B cell (primary cell): ENCODE measurements at regions of chr20 and their contacts with region 1.

Region 1: DNA sequence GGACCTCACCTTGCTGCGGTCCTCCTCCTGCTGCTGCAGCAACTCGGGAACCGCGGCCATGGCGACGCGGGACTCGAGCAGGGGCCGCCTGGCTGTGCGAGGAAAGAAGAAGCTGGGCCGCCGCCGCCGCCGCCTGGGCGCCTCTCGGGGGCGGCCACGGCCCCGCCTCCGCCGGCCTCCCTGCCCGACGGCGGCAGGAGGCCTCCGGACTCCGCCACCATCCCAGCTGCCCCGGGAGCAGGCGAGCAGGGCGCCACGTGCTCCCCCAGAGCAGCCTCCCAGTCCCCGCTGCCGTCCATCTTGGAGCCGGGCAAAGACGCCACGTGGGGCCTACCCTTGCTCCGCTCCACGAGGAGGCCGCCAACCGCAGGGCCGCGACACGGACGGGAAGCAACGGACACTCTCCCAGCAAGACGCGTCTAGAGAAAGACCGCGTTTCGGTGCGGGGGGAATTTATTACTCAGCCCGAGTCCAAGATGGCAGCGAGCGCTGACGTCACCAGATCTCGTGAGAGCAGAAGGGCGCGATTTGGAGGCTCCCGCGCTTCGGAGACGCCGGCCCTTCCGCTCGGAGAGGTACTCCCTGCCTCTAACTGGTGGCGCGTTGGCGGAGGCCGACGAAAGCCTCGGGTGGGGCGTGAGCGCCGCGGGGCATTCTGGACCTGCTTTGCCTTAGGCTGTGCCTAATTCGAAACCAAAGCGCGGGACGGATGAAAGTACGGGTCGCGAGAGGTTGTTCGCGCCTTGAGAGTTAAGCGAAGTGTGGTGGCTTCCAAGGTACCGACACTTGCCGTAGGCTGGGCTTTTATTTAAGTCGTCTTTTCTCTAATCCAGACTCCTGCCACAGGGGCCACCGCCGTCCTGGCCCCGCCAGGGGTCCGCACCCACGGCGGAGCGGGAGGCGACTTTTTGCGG is at the starts of genes MGME1 and SNX5:
- DNase-seq: peak; percentile 100
- ATAC-seq: peak; percentile 82
- H3K4me3 ChIP-seq: peak within 1 kb of the TSS; percentile 76 to 99 (median 97)
- H3K4me3 Mint-ChIP-seq: peak within 1 kb of the TSS; percentile 96
- H3K27ac ChIP-seq: peak within 1 kb of the TSS; percentile 96 to 97
- H3K27ac Mint-ChIP-seq: peak within 1 kb of the TSS; percentile 98
- H3K4me1 ChIP-seq: peaks cover 58 to 60% of the 10 kb centered on the region in 2 donors
- H3K4me1 Mint-ChIP-seq: peaks cover 78% of the 10 kb centered on the region
- H3K27me3 ChIP-seq: no peaks in the 10 kb centered on the region
- H3K27me3 Mint-ChIP-seq: no peaks in the 10 kb centered on the region
- CTCF ChIP-seq: no peak
- total RNA-seq, gene MGME1: 33.2 and 33.3 TPM in 2 replicates
- total RNA-seq, gene SNX5: 119 and 128 TPM in 2 replicates

Region 2: DNA sequence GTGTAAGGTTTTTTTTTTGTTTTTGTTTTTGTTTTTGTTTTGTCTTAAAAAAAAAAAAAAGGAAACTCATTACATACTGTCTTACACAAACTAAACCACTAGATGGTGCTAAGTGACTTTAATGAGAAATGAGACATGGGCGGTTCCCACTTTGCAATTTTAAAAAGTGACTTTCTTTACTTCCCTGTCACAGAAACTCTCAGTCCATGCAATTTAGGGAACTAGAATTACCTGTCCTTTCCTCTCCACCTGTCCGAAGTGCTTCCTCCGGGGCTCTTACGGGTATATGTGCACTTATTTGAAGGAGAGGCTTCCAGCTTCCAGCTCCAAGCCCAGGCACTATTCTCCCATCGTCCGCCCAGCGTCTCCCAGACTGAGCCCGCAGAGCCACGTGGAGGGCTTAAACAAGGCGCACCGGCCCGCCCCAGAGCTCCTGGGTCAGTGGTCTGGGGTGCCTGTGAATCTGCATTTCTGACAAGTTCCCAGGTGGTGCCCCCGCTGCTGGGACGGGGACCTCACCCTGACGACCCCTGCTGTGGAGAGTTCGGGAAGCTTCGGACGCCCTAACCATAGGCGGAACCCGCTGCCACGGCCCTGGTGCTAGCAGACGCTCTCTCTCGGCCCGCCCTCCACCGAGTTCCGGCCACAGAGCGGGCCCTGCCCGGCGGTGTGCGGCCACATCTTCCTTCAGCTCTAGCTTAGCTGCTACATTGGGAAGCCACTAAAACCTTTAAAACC is 463.6 kb before region 1 on chr20:
- CTCF ChIA-PET with region 1: interaction called, 3 read pairs
- POLR2A ChIA-PET with region 1: no interaction called
- intact Hi-C with region 1: loop called (anchors 1 kb)
- DNase-seq: peak; percentile 83
- ATAC-seq: peak; percentile 84
- H3K4me3 ChIP-seq: peak overlapping the region; percentile 47 to 81 (median 59)
- H3K4me3 Mint-ChIP-seq: peak overlapping the region; percentile 94
- H3K27ac ChIP-seq: peak overlapping the region; percentile 20 to 51
- H3K27ac Mint-ChIP-seq: peak overlapping the region; percentile 60
- H3K4me1 ChIP-seq: peaks cover 9 to 17% of the 10 kb centered on the region in 2 donors
- H3K4me1 Mint-ChIP-seq: peaks cover 13% of the 10 kb centered on the region
- H3K27me3 ChIP-seq: no peaks in the 10 kb centered on the region
- H3K27me3 Mint-ChIP-seq: peaks cover 7% of the 10 kb centered on the region
- CTCF ChIP-seq: peak; percentile 80

Region 3: DNA sequence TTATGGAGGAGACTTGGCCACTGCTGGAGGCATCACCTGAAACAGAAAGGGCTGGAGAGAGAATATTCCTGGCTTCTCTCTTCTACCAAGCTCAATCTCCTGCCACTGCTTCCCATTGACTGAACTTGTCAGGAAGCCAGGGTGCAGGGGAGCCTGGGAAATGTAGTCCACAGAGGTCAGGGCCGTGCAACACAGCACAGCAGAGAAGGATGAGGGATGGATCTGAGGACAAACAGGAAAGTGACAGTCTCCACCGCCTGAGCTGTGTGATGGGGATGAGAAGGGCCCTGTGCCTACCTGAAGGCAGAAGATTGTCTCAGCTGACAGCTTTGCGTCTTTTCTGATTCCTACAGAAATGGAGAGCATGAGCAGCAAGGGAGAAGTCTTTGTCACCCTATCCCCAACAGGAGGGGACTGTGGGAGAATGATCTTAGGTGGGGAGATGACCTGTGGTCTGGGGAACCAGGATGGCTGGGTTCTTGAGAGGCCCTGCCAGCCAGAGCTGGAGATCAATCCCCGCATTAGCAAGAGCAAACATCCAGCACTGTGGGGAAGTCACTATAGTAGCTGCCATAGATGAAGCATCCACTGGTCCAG is 114.2 kb before region 1 on chr20:
- CTCF ChIA-PET with region 1: interaction called, 3 read pairs
- POLR2A ChIA-PET with region 1: interaction called, 3 read pairs
- intact Hi-C with region 1: loop called (anchors 10 kb)
- DNase-seq: no peak
- ATAC-seq: no peak
- H3K4me3 ChIP-seq: no peak overlapping the region
- H3K4me3 Mint-ChIP-seq: no peak overlapping the region
- H3K27ac ChIP-seq: no peak overlapping the region
- H3K27ac Mint-ChIP-seq: peak overlapping the region; percentile 18
- H3K4me1 ChIP-seq: peaks cover 50 to 63% of the 10 kb centered on the region in 2 donors
- H3K4me1 Mint-ChIP-seq: peaks cover 67% of the 10 kb centered on the region
- H3K27me3 ChIP-seq: no peaks in the 10 kb centered on the region
- H3K27me3 Mint-ChIP-seq: no peaks in the 10 kb centered on the region
- CTCF ChIP-seq: no peak

Region 4: GRCh38 chr20:17958373-17959256 is 10.0 kb before region 1 on chr20:
- CTCF ChIA-PET with region 1: interaction called, 46 read pairs
- POLR2A ChIA-PET with region 1: interaction called, 6 read pairs
- intact Hi-C with region 1: loop called (anchors 1 kb)
- DNase-seq: no peak
- ATAC-seq: no peak
- H3K4me3 ChIP-seq: peak overlapping the region in 1 of 5 experiments; percentile 22
- H3K4me3 Mint-ChIP-seq: peak overlapping the region; percentile 77
- H3K27ac ChIP-seq: peak overlapping the region; percentile 4 to 77
- H3K27ac Mint-ChIP-seq: peak overlapping the region; percentile 86
- H3K4me1 ChIP-seq: peaks cover 88 to 96% of the 10 kb centered on the region in 2 donors
- H3K4me1 Mint-ChIP-seq: peaks cover 91% of the 10 kb centered on the region
- H3K27me3 ChIP-seq: no peaks in the 10 kb centered on the region
- H3K27me3 Mint-ChIP-seq: no peaks in the 10 kb centered on the region
- CTCF ChIP-seq: no peak

Region 5: GRCh38 chr20:18287915-18288748 is 319.5 kb after region 1 on chr20 and contains the start of gene ZNF133:
- CTCF ChIA-PET with region 1: no interaction called
- POLR2A ChIA-PET with region 1: no interaction called
- intact Hi-C with region 1: loop called (anchors 1 kb)
- DNase-seq: peak; percentile 98
- ATAC-seq: peak; percentile 94
- H3K4me3 ChIP-seq: peak within 1 kb of the TSS; percentile 88 to 99 (median 96)
- H3K4me3 Mint-ChIP-seq: peak within 1 kb of the TSS; percentile 90
- H3K27ac ChIP-seq: peak within 1 kb of the TSS; percentile 89 to 97
- H3K27ac Mint-ChIP-seq: peak within 1 kb of the TSS; percentile 96
- H3K4me1 ChIP-seq: peaks cover 12 to 15% of the 10 kb centered on the region in 2 donors
- H3K4me1 Mint-ChIP-seq: peaks cover 23% of the 10 kb centered on the region
- H3K27me3 ChIP-seq: peaks cover 0 to 19% (median 7%) of the 10 kb centered on the region in 4 experiments
- H3K27me3 Mint-ChIP-seq: peaks cover 28% of the 10 kb centered on the region
- CTCF ChIP-seq: no peak
- total RNA-seq, gene ZNF133: 13.6 and 14.9 TPM in 2 replicates

Region 6: DNA sequence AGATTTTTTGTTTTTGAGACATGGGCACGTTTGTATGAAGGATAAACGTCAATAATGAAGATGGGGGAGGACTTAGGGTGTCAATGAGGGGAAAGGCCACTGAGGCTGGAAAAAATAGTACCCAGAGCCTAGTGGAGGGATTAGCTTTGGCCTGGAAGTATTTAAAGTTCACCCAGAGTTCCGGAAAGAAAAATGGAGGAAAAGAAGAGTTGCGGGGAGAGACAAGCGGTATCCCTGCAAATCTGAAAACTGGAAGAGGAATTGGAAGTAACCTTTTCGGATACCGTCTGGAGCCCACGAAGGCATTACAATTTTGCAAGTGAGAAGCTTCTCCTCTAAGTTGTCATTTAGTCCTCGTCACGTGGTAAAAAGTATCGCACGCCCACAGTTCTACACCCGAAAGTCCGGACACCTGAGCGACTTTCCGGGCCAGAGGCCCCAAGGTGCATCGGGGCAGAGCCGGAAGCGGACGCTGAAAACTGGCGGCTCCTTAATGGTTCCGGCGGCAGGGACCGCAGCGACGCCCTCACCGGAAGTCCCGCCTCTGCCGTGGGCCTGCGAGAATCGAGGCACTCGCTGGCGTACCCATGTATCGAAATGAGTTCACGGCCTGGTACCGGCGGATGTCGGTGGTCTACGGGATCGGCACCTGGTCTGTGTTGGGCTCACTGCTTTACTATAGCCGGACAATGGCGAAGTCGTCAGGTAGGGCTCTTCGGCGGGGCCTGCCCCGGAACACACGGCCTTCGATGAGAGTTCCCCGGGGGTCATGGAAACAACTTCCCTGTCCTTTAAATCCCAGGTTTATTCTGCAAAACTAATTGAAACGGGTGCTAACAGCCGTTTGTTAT is 598.5 kb after region 1 on chr20 and contains the start of gene SMIM26:
- CTCF ChIA-PET with region 1: no interaction called
- POLR2A ChIA-PET with region 1: no interaction called
- intact Hi-C with region 1: loop called (anchors 2 kb)
- DNase-seq: peak; percentile 95
- ATAC-seq: peak; percentile 98
- H3K4me3 ChIP-seq: peak within 1 kb of the TSS; percentile 67 to 88 (median 80)
- H3K4me3 Mint-ChIP-seq: peak within 1 kb of the TSS; percentile 99
- H3K27ac ChIP-seq: peak within 1 kb of the TSS; percentile 84 to 91
- H3K27ac Mint-ChIP-seq: peak within 1 kb of the TSS; percentile 97
- H3K4me1 ChIP-seq: peaks cover 12 to 13% of the 10 kb centered on the region in 2 donors
- H3K4me1 Mint-ChIP-seq: peaks cover 18% of the 10 kb centered on the region
- H3K27me3 ChIP-seq: no peaks in the 10 kb centered on the region
- H3K27me3 Mint-ChIP-seq: no peaks in the 10 kb centered on the region
- CTCF ChIP-seq: no peak
- total RNA-seq, gene SMIM26: 47.4 and 47.7 TPM in 2 replicates

Region 7: DNA sequence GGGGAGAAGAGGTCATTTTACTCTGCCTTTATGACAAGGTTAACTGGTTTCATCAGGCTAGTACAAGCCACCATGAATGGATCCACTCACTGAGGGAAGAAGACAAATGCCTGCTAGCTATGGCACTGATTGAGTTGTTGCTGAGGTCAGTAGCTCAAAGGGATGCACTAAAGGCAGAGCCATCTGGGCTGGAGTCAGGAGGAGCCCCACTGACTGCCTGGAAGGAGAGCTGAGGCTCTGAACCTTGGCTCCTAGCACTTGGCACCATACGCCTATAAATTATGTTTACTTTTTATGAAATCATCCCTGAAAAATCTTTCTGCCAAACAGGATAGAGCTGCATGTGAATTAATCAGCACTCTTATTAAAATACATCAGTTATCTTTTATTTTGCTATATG is 723.8 kb after region 1 on chr20:
- CTCF ChIA-PET with region 1: no interaction called
- POLR2A ChIA-PET with region 1: no interaction called
- intact Hi-C with region 1: no loop called
- DNase-seq: no peak
- ATAC-seq: no peak
- H3K4me3 ChIP-seq: no peak overlapping the region
- H3K4me3 Mint-ChIP-seq: no peak overlapping the region
- H3K27ac ChIP-seq: no peak overlapping the region
- H3K27ac Mint-ChIP-seq: no peak overlapping the region
- H3K4me1 ChIP-seq: no peaks in the 10 kb centered on the region
- H3K4me1 Mint-ChIP-seq: no peaks in the 10 kb centered on the region
- H3K27me3 ChIP-seq: no peaks in the 10 kb centered on the region
- H3K27me3 Mint-ChIP-seq: no peaks in the 10 kb centered on the region
- CTCF ChIP-seq: no peak